CD8-positive, alpha-beta memory T cell (primary cell): ENCODE measurements at regions of chr7 and their contacts with region 1.

Region 1: GRCh38 chr7:87152107-87152844 is at the start of gene DMTF1:
- DNase-seq: peak; percentile 83 to 91 (median 85)
- H3K4me3 ChIP-seq: peak within 1 kb of the TSS; percentile 74
- H3K4me3 Mint-ChIP-seq: peak within 1 kb of the TSS; percentile 88 to 98 (median 95)
- H3K27ac ChIP-seq: peak within 1 kb of the TSS; percentile 88
- H3K27ac Mint-ChIP-seq: peak within 1 kb of the TSS; percentile 96 to 100 (median 99)
- H3K4me1 ChIP-seq: peaks cover 34% of the 10 kb centered on the region
- H3K4me1 Mint-ChIP-seq: peaks cover 42 to 54% (median 50%) of the 10 kb centered on the region in 3 donors
- H3K27me3 ChIP-seq: no peaks in the 10 kb centered on the region
- H3K27me3 Mint-ChIP-seq: peaks cover 0 to 4% of the 10 kb centered on the region in 2 donors
- total RNA-seq, gene DMTF1: 68.2 to 69.0 TPM

Region 2: DNA sequence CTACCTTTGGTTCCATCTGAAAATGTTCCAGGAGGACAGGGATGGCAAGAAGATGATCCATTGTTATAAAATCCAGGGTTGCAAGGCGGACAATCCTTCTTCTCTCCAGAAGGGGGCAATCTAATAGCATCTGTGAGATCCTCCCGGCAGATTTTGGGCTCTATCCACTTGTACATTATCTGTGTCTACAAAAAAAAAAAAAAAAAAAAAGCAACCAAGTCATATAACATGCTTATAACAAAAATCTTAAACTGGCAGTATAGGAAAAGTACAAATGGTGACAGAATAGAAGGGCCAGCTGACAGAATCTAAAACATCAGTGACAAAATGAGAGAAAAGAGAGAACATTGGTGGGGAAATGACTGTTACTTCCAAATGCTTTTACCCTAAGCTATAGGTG is 225.5 kb before region 1 on chr7:
- CTCF ChIA-PET with region 1: interaction called, 20 read pairs
- POLR2A ChIA-PET with region 1: no interaction called
- DNase-seq: peak in 4 of 5 donors; percentile 7 to 48 (median 38)
- H3K4me3 ChIP-seq: no peak overlapping the region
- H3K4me3 Mint-ChIP-seq: no peak overlapping the region
- H3K27ac ChIP-seq: no peak overlapping the region
- H3K27ac Mint-ChIP-seq: no peak overlapping the region
- H3K4me1 ChIP-seq: no peaks in the 10 kb centered on the region
- H3K4me1 Mint-ChIP-seq: no peaks in the 10 kb centered on the region
- H3K27me3 ChIP-seq: no peaks in the 10 kb centered on the region
- H3K27me3 Mint-ChIP-seq: peaks cover 3 to 8% of the 10 kb centered on the region in 2 donors

Region 3: GRCh38 chr7:87067788-87068187 is 84.5 kb before region 1 on chr7:
- CTCF ChIA-PET with region 1: no interaction called
- POLR2A ChIA-PET with region 1: no interaction called
- DNase-seq: no peak
- H3K4me3 ChIP-seq: no peak overlapping the region
- H3K4me3 Mint-ChIP-seq: no peak overlapping the region
- H3K27ac ChIP-seq: no peak overlapping the region
- H3K27ac Mint-ChIP-seq: no peak overlapping the region
- H3K4me1 ChIP-seq: no peaks in the 10 kb centered on the region
- H3K4me1 Mint-ChIP-seq: no peaks in the 10 kb centered on the region
- H3K27me3 ChIP-seq: no peaks in the 10 kb centered on the region
- H3K27me3 Mint-ChIP-seq: peaks cover 9 to 52% of the 10 kb centered on the region in 2 donors

Region 4: GRCh38 chr7:87100326-87100725 is 52.0 kb before region 1 on chr7:
- CTCF ChIA-PET with region 1: no interaction called
- POLR2A ChIA-PET with region 1: no interaction called
- DNase-seq: no peak
- H3K4me3 ChIP-seq: no peak overlapping the region
- H3K4me3 Mint-ChIP-seq: no peak overlapping the region
- H3K27ac ChIP-seq: no peak overlapping the region
- H3K27ac Mint-ChIP-seq: no peak overlapping the region
- H3K4me1 ChIP-seq: no peaks in the 10 kb centered on the region
- H3K4me1 Mint-ChIP-seq: no peaks in the 10 kb centered on the region
- H3K27me3 ChIP-seq: no peaks in the 10 kb centered on the region
- H3K27me3 Mint-ChIP-seq: peaks cover 2 to 11% of the 10 kb centered on the region in 2 donors

Region 5: DNA sequence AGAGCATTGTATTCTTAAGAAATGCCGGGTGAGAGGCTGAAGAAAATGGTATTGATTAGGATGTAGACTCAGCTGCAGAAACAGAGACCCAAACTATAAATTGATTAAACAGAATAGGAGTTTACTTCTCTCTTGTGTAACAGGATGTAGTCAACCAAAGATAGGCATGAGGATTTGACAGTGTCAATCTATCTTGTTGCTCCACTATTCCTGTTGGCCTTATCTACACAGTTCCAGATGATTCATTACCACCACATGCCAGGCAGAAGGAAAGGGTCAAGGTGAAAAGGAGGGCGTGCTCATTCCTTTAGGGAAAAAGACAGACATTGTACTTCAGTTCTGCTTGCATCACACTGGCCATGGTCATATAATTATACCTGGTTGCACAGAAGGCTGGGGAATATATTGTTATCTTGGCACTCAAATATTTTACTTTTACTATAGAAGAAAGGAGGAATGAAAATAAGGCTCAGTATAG is 12.0 kb before region 1 on chr7:
- CTCF ChIA-PET with region 1: interaction called, 12 read pairs
- POLR2A ChIA-PET with region 1: interaction called, 3 read pairs
- DNase-seq: no peak
- H3K4me3 ChIP-seq: no peak overlapping the region
- H3K4me3 Mint-ChIP-seq: no peak overlapping the region
- H3K27ac ChIP-seq: no peak overlapping the region
- H3K27ac Mint-ChIP-seq: peak overlapping the region in 1 of 8 donors; percentile 2
- H3K4me1 ChIP-seq: no peaks in the 10 kb centered on the region
- H3K4me1 Mint-ChIP-seq: peaks cover 0 to 7% (median 6%) of the 10 kb centered on the region in 3 donors
- H3K27me3 ChIP-seq: no peaks in the 10 kb centered on the region
- H3K27me3 Mint-ChIP-seq: peaks cover 11 to 25% of the 10 kb centered on the region in 2 donors

Region 6: DNA sequence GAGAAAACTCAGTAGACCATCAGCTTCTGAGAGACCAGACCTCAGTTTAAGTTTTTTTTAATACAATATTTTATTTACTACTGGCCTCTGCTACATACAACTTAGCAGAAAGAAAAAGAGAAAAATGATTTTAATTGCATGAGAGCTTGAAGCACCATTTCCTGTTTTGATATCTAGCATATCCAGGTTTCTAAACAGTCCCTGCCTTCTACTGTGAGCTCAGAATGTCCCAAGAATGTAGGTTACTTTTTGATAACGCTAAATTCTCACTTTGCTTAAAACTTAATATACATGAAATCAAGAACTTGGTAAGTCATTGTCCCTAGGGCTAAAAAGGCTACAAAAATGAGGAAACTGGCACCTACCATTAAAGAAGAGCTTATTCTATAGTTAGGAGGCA is 60.2 kb after region 1 on chr7:
- CTCF ChIA-PET with region 1: interaction called, 3 read pairs
- POLR2A ChIA-PET with region 1: interaction called, 14 read pairs
- DNase-seq: no peak
- H3K4me3 ChIP-seq: peak overlapping the region; percentile 39
- H3K4me3 Mint-ChIP-seq: peak overlapping the region; percentile 63 to 83 (median 79)
- H3K27ac ChIP-seq: no peak overlapping the region
- H3K27ac Mint-ChIP-seq: peak overlapping the region; percentile 2 to 99 (median 91)
- H3K4me1 ChIP-seq: peaks cover 90% of the 10 kb centered on the region
- H3K4me1 Mint-ChIP-seq: peaks cover 86 to 97% (median 95%) of the 10 kb centered on the region in 3 donors
- H3K27me3 ChIP-seq: no peaks in the 10 kb centered on the region
- H3K27me3 Mint-ChIP-seq: no peaks in the 10 kb centered on the region

Region 7: GRCh38 chr7:87219545-87220025 is 67.3 kb after region 1 on chr7 and contains the start of gene TMEM243:
- CTCF ChIA-PET with region 1: interaction called, 19 read pairs
- POLR2A ChIA-PET with region 1: interaction called, 69 read pairs
- DNase-seq: peak; percentile 79 to 91 (median 86)
- H3K4me3 ChIP-seq: peak within 1 kb of the TSS; percentile 87
- H3K4me3 Mint-ChIP-seq: peak within 1 kb of the TSS; percentile 97 to 99 (median 98)
- H3K27ac ChIP-seq: peak within 1 kb of the TSS; percentile 91
- H3K27ac Mint-ChIP-seq: peak within 1 kb of the TSS; percentile 97 to 99 (median 98)
- H3K4me1 ChIP-seq: peaks cover 39% of the 10 kb centered on the region
- H3K4me1 Mint-ChIP-seq: peaks cover 38 to 48% (median 47%) of the 10 kb centered on the region in 3 donors
- H3K27me3 ChIP-seq: no peaks in the 10 kb centered on the region
- H3K27me3 Mint-ChIP-seq: peaks cover 0 to 3% of the 10 kb centered on the region in 2 donors
- total RNA-seq, gene TMEM243: 62.9 to 73.3 TPM